ENCODE measurements at regions of chr12 and their contacts with region 1.

Region 1: DNA sequence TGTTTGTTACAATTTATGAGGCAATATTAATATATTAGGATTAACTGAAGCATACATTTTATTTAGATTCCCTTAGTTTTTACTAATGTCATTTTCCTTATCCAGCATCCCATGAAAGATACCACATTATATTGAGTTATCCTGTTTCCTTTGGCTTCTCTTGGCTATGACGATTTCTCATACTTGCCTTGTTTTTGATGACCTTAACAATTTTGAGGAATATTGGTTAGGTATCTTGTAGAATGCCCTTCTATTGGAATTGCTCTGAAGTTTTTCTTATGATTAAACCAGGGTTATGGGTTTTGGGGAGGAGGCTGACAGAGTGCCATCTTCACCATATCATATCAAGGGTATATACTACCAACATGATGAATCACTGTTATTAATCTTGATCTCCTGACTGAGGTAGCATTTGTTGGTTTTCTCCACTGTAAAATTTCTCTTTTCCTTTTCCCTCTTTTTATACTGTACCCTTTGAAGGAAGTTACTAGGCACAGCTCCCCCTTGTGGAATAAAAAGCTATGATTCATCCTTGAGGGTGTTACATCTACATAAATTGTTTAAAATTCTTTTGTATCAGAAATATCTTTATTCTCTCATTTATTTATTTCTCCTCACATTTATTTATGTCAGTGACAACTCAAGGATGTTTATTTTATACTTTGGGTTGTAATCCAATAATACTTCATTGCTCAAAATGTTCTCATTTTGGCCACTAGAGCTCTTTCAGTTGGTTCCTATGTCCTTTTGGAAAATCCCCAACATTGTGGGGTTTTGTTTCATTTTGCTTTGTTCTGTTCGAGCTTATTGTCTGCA is 239.0 kb downstream of the SLC16A7 start:
- DNase-seq: peak in 2 of 3 donors; percentile 10 to 27
- H3K4me3 ChIP-seq: no peak overlapping the region
- H3K4me3 Mint-ChIP-seq: no peak overlapping the region
- H3K27ac ChIP-seq: no peak overlapping the region
- H3K27ac Mint-ChIP-seq: no peak overlapping the region
- H3K4me1 ChIP-seq: no peaks in the 10 kb centered on the region
- H3K4me1 Mint-ChIP-seq: no peaks in the 10 kb centered on the region
- H3K27me3 ChIP-seq: no peaks in the 10 kb centered on the region
- H3K27me3 Mint-ChIP-seq: peaks cover 0 to 1% (median 0%) of the 10 kb centered on the region in 3 donors
- CTCF ChIP-seq: peak; percentile 79

Region 2: GRCh38 chr12:59396519-59396918 is 438.3 kb before region 1 on chr12:
- intact Hi-C with region 1: loop called (anchors 10 kb)
- DNase-seq: no peak
- H3K4me3 ChIP-seq: no peak overlapping the region
- H3K4me3 Mint-ChIP-seq: no peak overlapping the region
- H3K27ac ChIP-seq: no peak overlapping the region
- H3K27ac Mint-ChIP-seq: no peak overlapping the region
- H3K4me1 ChIP-seq: no peaks in the 10 kb centered on the region
- H3K4me1 Mint-ChIP-seq: peaks cover 7% of the 10 kb centered on the region
- H3K27me3 ChIP-seq: no peaks in the 10 kb centered on the region
- H3K27me3 Mint-ChIP-seq: peaks cover 0 to 2% (median 0%) of the 10 kb centered on the region in 3 donors
- CTCF ChIP-seq: no peak

Region 3: GRCh38 chr12:59403259-59403932 is 431.5 kb before region 1 on chr12:
- intact Hi-C with region 1: loop called (anchors 10 kb)
- DNase-seq: peak; percentile 25 to 51 (median 50)
- H3K4me3 ChIP-seq: no peak overlapping the region
- H3K4me3 Mint-ChIP-seq: peak overlapping the region in 1 of 2 donors; percentile 61
- H3K27ac ChIP-seq: no peak overlapping the region
- H3K27ac Mint-ChIP-seq: no peak overlapping the region
- H3K4me1 ChIP-seq: peaks cover 3% of the 10 kb centered on the region in 2 donors
- H3K4me1 Mint-ChIP-seq: peaks cover 11% of the 10 kb centered on the region
- H3K27me3 ChIP-seq: no peaks in the 10 kb centered on the region
- H3K27me3 Mint-ChIP-seq: no peaks in the 10 kb centered on the region
- CTCF ChIP-seq: peak; percentile 88

Region 4: GRCh38 chr12:59999291-59999690 is 164.4 kb after region 1 on chr12:
- intact Hi-C with region 1: no loop called
- DNase-seq: no peak
- H3K4me3 ChIP-seq: no peak overlapping the region
- H3K4me3 Mint-ChIP-seq: no peak overlapping the region
- H3K27ac ChIP-seq: no peak overlapping the region
- H3K27ac Mint-ChIP-seq: no peak overlapping the region
- H3K4me1 ChIP-seq: no peaks in the 10 kb centered on the region
- H3K4me1 Mint-ChIP-seq: no peaks in the 10 kb centered on the region
- H3K27me3 ChIP-seq: no peaks in the 10 kb centered on the region
- H3K27me3 Mint-ChIP-seq: no peaks in the 10 kb centered on the region
- CTCF ChIP-seq: no peak